Left cardiac atrium (tissue), 4 donors: ENCODE measurements at regions of chr1 and their contacts with region 1.

Region 1: DNA sequence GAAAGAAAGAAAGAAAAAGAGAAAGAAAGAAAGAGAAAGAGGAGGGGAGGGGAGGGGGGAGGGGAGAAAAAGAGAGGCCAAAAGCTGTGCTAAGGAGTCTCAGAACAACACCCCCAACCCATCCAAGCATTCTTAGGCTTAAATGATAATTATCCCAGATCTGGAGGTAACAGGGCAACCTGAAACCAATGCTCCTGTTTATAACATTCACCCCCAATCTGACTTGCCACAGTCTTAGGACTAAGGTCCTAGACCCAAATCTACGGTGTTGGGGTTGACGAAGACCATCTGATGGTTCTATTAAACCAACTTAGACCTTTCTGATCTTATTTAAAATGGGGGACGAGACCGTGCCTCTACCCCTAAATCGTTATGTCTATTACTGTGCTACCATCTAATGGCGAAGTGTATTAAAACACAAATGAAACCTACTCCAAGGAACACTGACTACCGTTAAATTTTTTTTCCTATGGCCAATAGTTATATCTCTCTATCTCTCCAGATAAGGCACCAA is 119.3 kb upstream of the CDC42BPA start:
- DNase-seq: no peak
- ATAC-seq: peak; percentile 82 to 83

Region 2: GRCh38 chr1:227131193-227131592 is 306.4 kb before region 1 on chr1:
- intact Hi-C with region 1: loop called in 1 of 2 experiments (anchors 5 kb)
- DNase-seq: no peak
- ATAC-seq: peak in 1 of 2 donors; percentile 27

Region 3: DNA sequence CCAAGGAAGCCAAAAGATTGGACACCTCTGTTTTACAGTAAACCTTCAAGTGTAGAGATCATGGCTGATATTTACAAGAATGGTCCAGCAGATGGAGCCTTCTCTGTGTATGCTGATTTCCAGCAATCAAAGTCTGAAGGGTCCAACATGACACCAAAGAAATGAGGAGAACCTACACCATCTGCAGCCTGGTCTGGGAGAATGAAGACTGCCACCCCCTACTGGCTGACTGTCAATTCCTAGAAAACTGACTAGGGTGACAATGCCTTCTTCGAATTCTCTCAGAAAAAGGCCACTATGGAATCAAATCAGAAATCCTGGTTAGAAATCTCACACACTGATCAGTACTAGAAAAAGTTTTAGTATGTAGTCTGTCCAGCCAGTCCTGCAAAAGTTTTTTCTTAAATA is 202.6 kb before region 1 on chr1:
- intact Hi-C with region 1: loop called (anchors 5 to 10 kb)
- DNase-seq: no peak
- ATAC-seq: peak; percentile 49 to 65

Region 4: DNA sequence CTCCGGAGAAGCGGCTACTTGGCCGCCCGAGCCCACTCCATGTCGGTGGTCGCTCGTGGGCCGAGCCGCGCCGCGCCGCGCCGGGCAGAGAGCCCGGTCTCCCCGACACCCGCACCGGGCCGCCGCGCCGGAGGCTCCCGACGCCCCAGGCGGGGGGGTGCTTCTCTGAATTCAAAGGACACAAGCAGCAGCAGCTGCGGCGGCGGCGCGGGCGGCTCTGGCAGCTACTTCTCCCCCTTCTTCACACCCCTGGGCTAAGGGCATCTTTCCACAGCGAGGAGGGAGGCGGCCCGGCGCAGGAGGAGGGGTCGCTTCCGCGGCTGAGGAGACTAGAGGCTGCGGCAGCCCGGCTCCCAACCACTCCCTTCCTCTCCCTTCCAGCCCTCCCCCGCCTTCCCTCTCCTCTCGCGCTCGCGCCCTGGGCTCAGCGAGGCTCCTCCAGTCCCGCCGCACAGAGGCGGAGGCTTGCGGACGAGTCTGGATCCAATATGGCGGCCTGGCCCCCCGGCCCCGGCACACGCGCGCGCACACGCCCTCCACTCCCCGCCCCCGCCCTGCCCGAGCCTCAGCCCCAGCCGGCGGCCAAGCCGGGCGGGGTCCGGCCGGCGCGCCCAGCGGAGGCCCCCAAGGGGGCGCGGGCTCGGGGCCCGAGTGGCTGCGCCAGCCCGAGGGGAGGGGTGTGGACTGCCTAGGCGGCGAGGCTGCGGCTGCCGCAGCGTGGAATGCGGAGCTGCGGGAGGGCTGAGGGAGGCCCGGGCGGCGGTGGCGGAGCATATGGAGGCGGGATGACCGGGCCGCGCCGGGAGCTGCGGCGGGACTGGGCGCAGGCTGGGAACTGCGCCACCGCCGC is 119.3 kb before region 1 on chr1 and contains the start of gene CDC42BPA:
- intact Hi-C with region 1: loop called (anchors 2 to 10 kb)
- DNase-seq: peak; percentile 90
- ATAC-seq: peak; percentile 91 to 95
- total RNA-seq, gene CDC42BPA: 35.3 to 41.0 TPM

Region 5: DNA sequence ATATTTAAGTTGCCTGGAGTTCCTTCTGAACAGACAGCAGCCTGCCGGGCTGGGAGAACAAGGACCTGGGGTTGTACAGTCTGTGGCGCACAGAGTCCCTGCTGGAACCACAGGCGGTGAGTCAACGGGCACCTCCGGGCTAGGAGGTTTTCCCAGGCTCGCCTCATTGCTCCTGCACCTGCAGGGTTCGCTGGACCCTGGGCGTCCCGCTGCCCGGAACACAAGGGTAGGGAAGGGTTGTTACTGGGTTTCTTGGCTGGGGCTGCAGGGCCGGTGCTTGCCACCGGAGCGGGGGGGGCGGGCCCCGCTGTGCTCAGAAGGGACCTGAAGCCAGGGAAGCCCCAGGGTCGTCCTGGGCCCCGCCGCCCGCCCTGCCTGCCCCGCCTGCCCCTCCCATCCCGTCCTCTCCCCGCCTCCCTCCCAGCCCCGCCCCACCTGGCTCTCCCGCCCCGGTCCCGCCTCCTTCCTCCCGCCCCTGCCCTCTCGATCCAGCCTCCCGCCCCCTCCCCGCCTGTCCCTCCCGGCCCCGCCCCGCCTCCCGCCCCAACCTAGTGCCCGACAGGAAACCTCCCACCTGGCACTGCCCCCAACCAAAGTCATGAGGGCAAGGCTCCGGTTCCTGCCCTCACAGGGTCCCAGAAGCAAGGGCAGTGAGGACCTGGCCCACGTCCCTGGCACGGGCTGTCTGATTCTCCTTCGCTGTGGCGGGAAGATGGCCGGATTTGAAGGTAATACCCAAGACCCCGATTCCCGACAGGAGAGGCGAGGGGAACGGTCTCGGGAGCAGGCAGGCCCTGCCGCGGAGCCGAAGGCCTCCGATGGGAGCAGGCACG is 290.7 kb after region 1 on chr1:
- intact Hi-C with region 1: no loop called
- DNase-seq: peak; percentile 81
- ATAC-seq: peak; percentile 70 to 79